ENCODE measurements at regions of chr10 and their contacts with region 1.

Region 1: DNA sequence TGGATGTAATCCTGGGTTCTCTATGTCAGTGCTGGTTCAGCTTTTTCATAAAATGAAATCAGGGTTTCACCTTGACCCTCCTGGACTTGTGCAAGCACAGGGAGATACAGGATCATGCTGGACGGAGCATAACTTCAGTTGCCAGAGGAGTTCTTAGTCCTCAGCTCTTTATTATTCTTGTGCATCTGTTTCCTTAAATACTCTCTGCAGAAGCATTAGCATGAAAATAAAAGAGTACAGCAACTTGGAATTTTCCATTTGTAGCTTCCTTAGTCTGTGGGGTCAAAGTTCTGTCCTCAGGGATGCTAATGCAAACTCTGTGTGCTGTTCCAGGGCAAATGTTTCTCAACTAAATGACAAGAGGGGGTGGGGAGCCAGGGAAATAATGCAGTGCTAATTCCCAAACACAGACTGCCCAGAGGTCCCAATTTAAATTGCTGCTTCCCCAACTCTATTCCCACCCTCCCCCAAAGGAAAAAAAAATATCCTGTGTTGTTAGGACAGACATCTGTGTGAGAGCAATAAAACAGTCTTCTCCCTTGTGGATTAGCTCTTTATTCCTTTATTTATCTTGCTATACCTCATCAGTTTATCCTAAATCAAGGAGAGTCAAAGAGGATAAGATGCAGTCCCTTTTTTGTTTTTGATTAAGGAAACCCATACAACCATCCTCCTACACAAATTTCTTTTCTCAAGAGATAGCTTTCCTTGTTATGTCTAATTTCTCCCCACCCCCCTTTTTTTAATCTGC is 905.0 kb downstream of the LRMDA start:
- DNase-seq: peak; percentile 48
- H3K4me3 ChIP-seq: no peak overlapping the region
- H3K27ac ChIP-seq: peak overlapping the region in 1 of 2 donors; percentile 55
- H3K4me1 ChIP-seq: peaks cover 26% of the 10 kb centered on the region
- H3K27me3 ChIP-seq: no peaks in the 10 kb centered on the region
- CTCF ChIP-seq: no peak
- POLR2A ChIP-seq: no peak

Region 2: DNA sequence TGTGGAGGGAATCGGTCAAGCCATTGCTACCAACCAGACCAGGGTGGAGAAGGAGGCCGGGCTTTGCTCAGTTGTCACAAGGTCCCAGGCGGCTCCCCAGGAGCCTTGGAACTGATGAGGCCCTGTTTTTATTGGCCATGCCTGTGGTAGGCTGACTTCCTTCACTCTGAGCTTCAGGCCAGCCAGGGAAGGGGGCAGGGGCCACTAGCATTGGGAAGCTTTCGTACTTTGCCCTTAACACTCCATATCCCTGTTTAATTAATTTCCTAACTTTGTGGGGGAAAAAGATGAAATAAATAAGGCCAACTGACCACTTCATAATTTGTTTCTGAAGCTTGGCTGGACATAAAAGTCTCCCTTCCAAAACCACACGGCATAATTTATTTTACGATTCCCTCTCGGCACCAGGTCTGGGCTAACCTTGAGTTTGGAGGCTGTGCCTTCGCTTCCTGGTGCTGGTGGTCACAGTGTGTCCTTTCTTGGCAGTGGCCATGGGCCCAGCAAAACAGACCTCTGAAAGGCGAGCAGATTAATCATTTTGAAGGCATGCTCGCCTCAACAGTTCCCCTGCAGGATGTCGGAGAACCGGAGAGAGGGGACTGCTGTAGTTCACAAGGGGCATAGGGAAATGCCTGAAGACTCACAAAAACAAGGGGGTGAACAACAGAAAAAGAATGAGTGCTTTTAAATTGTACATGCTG is 60.9 kb after region 1 on chr10:
- intact Hi-C with region 1: loop called (anchors 10 kb)
- DNase-seq: peak; percentile 49
- H3K4me3 ChIP-seq: no peak overlapping the region
- H3K27ac ChIP-seq: peak overlapping the region in 1 of 2 donors; percentile 61
- H3K4me1 ChIP-seq: peaks cover 26% of the 10 kb centered on the region
- H3K27me3 ChIP-seq: no peaks in the 10 kb centered on the region
- CTCF ChIP-seq: no peak
- POLR2A ChIP-seq: no peak

Region 3: GRCh38 chr10:77328272-77328816 is 992.0 kb after region 1 on chr10:
- intact Hi-C with region 1: no loop called
- DNase-seq: peak; percentile 36
- H3K4me3 ChIP-seq: no peak overlapping the region
- H3K27ac ChIP-seq: no peak overlapping the region
- H3K4me1 ChIP-seq: no peaks in the 10 kb centered on the region
- H3K27me3 ChIP-seq: no peaks in the 10 kb centered on the region
- CTCF ChIP-seq: no peak
- POLR2A ChIP-seq: no peak